Esophagus squamous epithelium (tissue), 5 donors: ENCODE measurements at regions of chr1 and their contacts with region 1.

Region 1: GRCh38 chr1:46477153-46477929 is 12.3 kb upstream of the DMBX1 start:
- DNase-seq: peak; percentile 7
- H3K4me3 ChIP-seq: no peak overlapping the region
- H3K27ac ChIP-seq: no peak overlapping the region
- H3K4me1 ChIP-seq: no peaks in the 10 kb centered on the region
- H3K27me3 ChIP-seq: peaks cover 0 to 85% (median 0%) of the 10 kb centered on the region in 4 donors
- CTCF ChIP-seq: peak; percentile 75 to 96 (median 90)
- POLR2A ChIP-seq: no peak

Region 2: DNA sequence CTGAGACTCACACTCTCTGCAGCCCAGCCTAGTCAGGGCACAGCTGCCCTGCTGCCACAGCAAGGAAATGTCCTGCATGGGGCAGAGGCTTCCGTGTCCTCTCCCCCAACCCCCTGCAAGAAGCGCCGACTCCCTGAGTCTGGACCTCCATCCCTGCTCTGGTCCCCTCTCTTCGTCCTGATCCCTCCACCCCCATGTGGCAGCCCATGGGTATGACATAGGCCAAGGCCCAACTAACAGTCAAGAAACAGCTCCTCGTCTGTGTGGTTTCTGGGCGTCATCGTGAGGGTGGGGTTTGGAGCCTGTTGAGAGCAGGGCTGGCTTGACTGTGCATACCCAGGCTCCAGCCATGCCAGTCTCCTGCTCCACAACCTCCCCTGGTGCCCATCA is 63.8 kb before region 1 on chr1:
- intact Hi-C with region 1: no loop called
- DNase-seq: no peak
- H3K4me3 ChIP-seq: no peak overlapping the region
- H3K27ac ChIP-seq: no peak overlapping the region
- H3K4me1 ChIP-seq: no peaks in the 10 kb centered on the region
- H3K27me3 ChIP-seq: no peaks in the 10 kb centered on the region
- CTCF ChIP-seq: no peak
- POLR2A ChIP-seq: no peak

Region 3: DNA sequence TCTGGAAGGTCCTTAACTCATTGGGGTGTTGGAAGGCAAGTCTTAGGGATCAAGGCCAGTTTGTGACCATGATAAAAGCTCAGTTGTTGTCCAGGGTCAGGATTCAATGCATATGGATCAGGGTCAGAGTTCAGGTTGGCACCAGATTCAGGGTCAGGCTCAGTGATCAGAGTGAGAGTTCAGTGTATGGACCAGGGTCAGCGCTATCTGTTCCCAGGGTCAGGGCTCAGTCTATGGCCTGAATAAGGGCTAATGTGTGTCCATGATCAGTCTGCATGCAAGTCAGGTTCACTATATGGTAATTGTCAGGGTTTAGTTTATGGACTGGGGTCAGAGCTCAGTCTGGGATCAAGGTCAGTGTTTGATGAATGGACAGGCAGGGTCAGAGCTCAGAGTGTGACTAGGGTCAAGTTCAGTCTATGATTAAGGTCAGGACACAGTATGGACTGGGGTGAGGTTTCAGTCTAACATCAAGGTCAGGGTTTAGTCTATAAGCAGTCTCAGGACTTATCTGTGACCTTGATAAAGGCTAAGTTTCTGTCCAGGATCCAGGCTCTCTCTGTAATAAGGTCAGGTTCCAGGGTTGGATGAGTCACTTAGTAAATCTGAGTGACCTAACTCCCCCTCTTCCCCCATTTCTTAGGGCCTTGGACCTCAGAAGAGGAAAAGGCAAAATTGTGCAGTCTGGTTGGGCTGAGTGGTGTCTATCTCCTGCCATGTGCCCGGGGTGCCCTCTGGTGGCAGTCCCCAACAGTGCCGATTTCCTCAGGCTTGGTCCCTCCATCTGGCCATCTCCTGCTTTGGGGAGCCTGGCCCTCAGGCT is 50.3 kb after region 1 on chr1:
- intact Hi-C with region 1: loop called (anchors 5 kb)
- DNase-seq: peak; percentile 15
- H3K4me3 ChIP-seq: no peak overlapping the region
- H3K27ac ChIP-seq: no peak overlapping the region
- H3K4me1 ChIP-seq: peaks cover 11 to 46% (median 11%) of the 10 kb centered on the region in 3 donors
- H3K27me3 ChIP-seq: peaks cover 0 to 81% (median 0%) of the 10 kb centered on the region in 4 donors
- CTCF ChIP-seq: peak; percentile 65 to 96 (median 94)
- POLR2A ChIP-seq: no peak